Activated CD4-positive, alpha-beta T cell treated with anti-CD3 and anti-CD28 coated beads, Interleukin-2, amount 10 ng/mL, durations not matched to agents 24 days and 14 days (primary cell): ENCODE measurements at regions of chr17 and their contacts with region 1.

Region 1: GRCh38 chr17:73226556-73227172 is 33.8 kb downstream of the COG1 start:
- DNase-seq: no peak
- H3K4me3 Mint-ChIP-seq: peak overlapping the region; percentile 58
- H3K27ac Mint-ChIP-seq: peak overlapping the region; percentile 14
- H3K4me1 Mint-ChIP-seq: peaks cover 58% of the 10 kb centered on the region
- H3K27me3 Mint-ChIP-seq: no peaks in the 10 kb centered on the region

Region 2: GRCh38 chr17:73210002-73210678 is 16.5 kb before region 1 on chr17:
- intact Hi-C with region 1: loop called (anchors 2 kb)
- DNase-seq: no peak
- H3K4me3 Mint-ChIP-seq: no peak overlapping the region
- H3K27ac Mint-ChIP-seq: peak overlapping the region; percentile 71
- H3K4me1 Mint-ChIP-seq: peaks cover 21% of the 10 kb centered on the region
- H3K27me3 Mint-ChIP-seq: no peaks in the 10 kb centered on the region

Region 3: GRCh38 chr17:73342050-73342522 is 115.4 kb after region 1 on chr17:
- intact Hi-C with region 1: no loop called
- DNase-seq: no peak
- H3K4me3 Mint-ChIP-seq: no peak overlapping the region
- H3K27ac Mint-ChIP-seq: no peak overlapping the region
- H3K4me1 Mint-ChIP-seq: peaks cover 2% of the 10 kb centered on the region
- H3K27me3 Mint-ChIP-seq: no peaks in the 10 kb centered on the region

Region 4: GRCh38 chr17:73591296-73592078 is 364.8 kb after region 1 on chr17:
- intact Hi-C with region 1: no loop called
- DNase-seq: peak; percentile 87
- H3K4me3 Mint-ChIP-seq: peak overlapping the region; percentile 71
- H3K27ac Mint-ChIP-seq: peak overlapping the region; percentile 91
- H3K4me1 Mint-ChIP-seq: peaks cover 60% of the 10 kb centered on the region
- H3K27me3 Mint-ChIP-seq: no peaks in the 10 kb centered on the region